Heart right ventricle (tissue), 16 donors: ENCODE measurements at regions of chr21 and their contacts with region 1.

Region 1: DNA sequence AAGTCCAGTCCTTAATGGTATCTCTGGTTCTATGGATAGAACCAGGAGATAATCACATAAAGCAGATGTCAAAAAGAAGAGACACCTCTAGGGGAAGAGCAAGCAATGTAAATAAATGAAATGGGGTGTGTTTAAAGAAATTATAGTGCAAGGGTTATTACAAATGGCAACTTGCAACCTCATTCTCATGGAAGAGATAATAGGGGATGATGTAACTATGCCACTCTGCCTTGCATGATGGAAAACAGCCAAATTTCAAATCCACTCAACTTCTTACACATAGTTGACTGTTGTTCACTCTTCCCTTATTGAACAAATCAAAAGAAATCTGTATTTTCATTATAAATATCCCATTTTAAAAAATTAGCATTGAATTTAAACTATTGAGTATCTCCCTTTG is 274.0 kb upstream of the TMPRSS15 start:
- DNase-seq: no peak
- ATAC-seq: no peak
- H3K4me3 ChIP-seq: no peak overlapping the region
- H3K27ac ChIP-seq: no peak overlapping the region
- H3K4me1 ChIP-seq: no peaks in the 10 kb centered on the region
- H3K27me3 ChIP-seq: no peaks in the 10 kb centered on the region
- CTCF ChIP-seq: no peak

Region 2: DNA sequence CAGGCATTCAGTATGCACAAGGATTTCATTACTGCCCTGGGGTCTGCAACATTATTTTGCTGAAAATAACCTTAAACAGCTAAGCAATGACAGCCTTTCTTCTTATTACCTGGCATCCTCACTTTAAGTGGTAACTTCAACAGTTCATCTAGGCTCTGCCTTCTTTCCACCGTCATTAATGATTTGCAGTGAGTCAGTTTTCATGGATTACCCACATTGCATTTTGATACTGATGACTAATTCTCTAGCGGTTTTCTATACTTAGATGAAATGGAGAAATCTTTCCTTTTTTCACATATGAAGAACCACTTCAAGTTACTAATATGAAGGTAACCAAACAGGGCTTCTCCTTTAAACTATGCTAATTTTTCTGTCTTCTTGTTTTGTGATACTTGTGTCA is 47.2 kb before region 1 on chr21:
- intact Hi-C with region 1: loop called in 1 of 10 experiments (anchors 2 kb)
- DNase-seq: no peak
- ATAC-seq: no peak
- H3K4me3 ChIP-seq: no peak overlapping the region
- H3K27ac ChIP-seq: no peak overlapping the region
- H3K4me1 ChIP-seq: no peaks in the 10 kb centered on the region
- H3K27me3 ChIP-seq: no peaks in the 10 kb centered on the region
- CTCF ChIP-seq: no peak

Region 3: DNA sequence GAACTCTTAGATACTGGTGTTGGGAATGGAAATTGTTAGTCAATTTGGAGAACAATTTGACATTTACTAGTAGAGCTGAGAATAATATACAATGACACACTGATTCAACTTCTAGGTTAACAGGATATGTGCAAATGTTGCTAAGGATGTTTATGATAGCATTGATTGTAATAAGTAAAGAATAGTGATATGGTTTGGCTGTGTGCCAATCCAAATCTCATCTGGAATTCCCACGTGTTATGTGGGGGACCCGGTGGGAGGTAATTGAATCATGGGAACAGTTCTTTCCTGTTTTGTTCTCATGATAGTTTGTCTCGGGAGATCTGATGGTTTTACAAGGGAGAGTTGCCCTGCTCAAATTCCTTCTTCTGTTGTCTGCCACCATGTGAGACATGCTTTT is 28.3 kb after region 1 on chr21:
- intact Hi-C with region 1: no loop called
- DNase-seq: no peak
- ATAC-seq: no peak
- H3K4me3 ChIP-seq: no peak overlapping the region
- H3K27ac ChIP-seq: no peak overlapping the region
- H3K4me1 ChIP-seq: no peaks in the 10 kb centered on the region
- H3K27me3 ChIP-seq: no peaks in the 10 kb centered on the region
- CTCF ChIP-seq: no peak

Region 4: GRCh38 chr21:18716575-18717138 is 39.0 kb after region 1 on chr21:
- intact Hi-C with region 1: no loop called
- DNase-seq: no peak
- ATAC-seq: no peak
- H3K4me3 ChIP-seq: no peak overlapping the region
- H3K27ac ChIP-seq: no peak overlapping the region
- H3K4me1 ChIP-seq: no peaks in the 10 kb centered on the region
- H3K27me3 ChIP-seq: no peaks in the 10 kb centered on the region
- CTCF ChIP-seq: no peak

Region 5: GRCh38 chr21:18743531-18743930 is 65.9 kb after region 1 on chr21:
- intact Hi-C with region 1: no loop called
- DNase-seq: no peak
- ATAC-seq: no peak
- H3K4me3 ChIP-seq: no peak overlapping the region
- H3K27ac ChIP-seq: no peak overlapping the region
- H3K4me1 ChIP-seq: no peaks in the 10 kb centered on the region
- H3K27me3 ChIP-seq: no peaks in the 10 kb centered on the region
- CTCF ChIP-seq: no peak

Region 6: GRCh38 chr21:18782721-18783120 is 105.1 kb after region 1 on chr21:
- intact Hi-C with region 1: no loop called
- DNase-seq: no peak
- ATAC-seq: no peak
- H3K4me3 ChIP-seq: no peak overlapping the region
- H3K27ac ChIP-seq: no peak overlapping the region
- H3K4me1 ChIP-seq: no peaks in the 10 kb centered on the region
- H3K27me3 ChIP-seq: no peaks in the 10 kb centered on the region
- CTCF ChIP-seq: no peak